A673 (cell line): ENCODE measurements at regions of chr16 and their contacts with region 1.

Region 1: DNA sequence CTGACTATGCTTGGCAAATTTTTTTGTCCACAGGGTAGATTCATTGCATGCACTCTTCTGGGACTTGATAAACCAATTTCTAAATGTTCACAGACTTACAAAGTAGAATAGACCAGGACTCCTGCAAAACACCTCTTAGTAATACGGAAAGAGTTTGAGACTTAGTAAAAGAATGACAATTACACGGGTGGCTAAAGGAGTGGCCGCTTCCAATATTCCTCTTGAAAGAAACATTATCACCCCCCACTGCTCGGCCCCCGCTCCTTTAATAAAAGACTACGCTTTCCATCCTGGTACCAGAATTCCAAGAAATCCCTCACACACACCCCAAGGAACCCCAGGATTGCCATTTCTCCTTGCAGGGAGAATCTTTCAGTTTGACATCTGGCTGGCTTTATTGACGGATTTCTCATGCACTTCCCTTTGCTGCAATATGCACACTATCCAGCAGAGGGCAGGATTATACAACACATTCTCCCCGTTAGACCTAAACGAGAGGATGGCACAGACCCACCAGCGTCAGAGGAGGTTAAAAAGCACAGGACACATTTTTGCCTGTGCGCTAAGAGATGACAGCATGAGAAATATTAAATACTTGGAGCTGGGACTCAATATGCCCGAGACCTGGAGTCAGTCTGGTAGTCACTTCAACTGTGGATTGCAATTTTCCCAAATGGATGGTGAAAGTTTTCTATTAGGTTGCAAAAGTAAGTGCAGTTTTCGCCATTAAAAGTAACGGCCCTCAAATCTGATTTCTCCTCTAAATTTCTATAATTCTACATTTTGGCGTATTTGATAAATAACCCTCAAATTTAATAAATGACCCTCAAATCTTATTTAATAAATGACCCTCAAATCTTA is 46.6 kb upstream of the NUDT7 start:
- DNase-seq: peak; percentile 82
- H3K4me3 ChIP-seq: no peak overlapping the region
- H3K27ac ChIP-seq: no peak overlapping the region
- H3K4me1 ChIP-seq: no peaks in the 10 kb centered on the region
- H3K27me3 ChIP-seq: no peaks in the 10 kb centered on the region
- CTCF ChIP-seq: peak; percentile 90

Region 2: DNA sequence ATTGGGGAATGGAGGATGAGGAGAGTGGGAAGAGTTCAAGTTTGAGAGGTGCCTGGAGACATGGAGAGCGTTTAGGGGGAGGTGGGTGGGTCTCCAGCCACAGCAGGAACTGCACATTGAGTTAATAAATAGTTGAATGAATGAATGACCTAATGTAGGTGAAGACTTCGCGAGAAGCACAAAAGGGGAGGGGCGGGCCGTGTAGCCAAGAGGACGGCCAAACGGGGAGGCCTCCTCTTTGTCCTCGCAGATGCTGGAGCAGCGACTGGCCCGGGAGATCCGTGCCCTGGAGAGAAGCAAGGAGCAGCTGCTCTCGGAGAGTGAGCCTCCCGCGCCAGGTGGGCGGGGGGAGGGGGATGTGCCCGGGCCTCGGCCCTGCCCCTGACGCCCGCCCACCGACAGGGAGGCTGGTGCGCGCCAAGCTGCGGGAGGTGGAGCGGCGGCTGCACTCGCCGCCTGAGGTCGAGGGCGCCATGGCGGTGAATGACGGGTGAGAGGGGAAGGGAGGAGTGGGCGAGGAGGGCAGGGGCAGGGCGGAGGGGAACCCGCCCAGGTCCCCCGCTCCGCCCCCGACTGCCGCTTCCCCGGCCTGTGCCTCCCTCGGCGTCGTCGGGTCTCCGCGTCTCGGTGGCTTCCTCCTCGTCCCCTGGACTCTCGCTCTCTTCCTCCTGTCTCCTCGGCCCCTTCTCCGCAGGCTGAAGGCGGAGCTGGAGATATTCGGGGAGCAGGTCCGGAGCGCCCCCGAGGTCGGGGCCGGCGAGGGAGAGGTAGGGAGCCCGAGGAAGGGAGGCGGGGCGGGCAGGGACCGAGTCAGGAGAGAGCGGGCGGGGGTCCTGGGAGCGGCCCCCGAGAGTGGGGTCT is 463.6 kb before region 1 on chr16:
- CTCF ChIA-PET with region 1: no interaction called
- POLR2A ChIA-PET with region 1: no interaction called
- intact Hi-C with region 1: no loop called
- DNase-seq: peak; percentile 59
- H3K4me3 ChIP-seq: peak overlapping the region; percentile 57
- H3K27ac ChIP-seq: no peak overlapping the region
- H3K4me1 ChIP-seq: peaks cover 4% of the 10 kb centered on the region
- H3K27me3 ChIP-seq: peaks cover 4% of the 10 kb centered on the region
- CTCF ChIP-seq: no peak

Region 3: GRCh38 chr16:77971306-77972271 is 295.9 kb after region 1 on chr16:
- CTCF ChIA-PET with region 1: no interaction called
- POLR2A ChIA-PET with region 1: no interaction called
- intact Hi-C with region 1: loop called (anchors 1 kb)
- DNase-seq: peak; percentile 72
- H3K4me3 ChIP-seq: no peak overlapping the region
- H3K27ac ChIP-seq: no peak overlapping the region
- H3K4me1 ChIP-seq: no peaks in the 10 kb centered on the region
- H3K27me3 ChIP-seq: no peaks in the 10 kb centered on the region
- CTCF ChIP-seq: peak; percentile 86

Region 4: GRCh38 chr16:78002915-78003538 is 327.3 kb after region 1 on chr16:
- CTCF ChIA-PET with region 1: interaction called, 3 read pairs
- POLR2A ChIA-PET with region 1: no interaction called
- intact Hi-C with region 1: loop called (anchors 1 kb)
- DNase-seq: peak; percentile 93
- H3K4me3 ChIP-seq: no peak overlapping the region
- H3K27ac ChIP-seq: no peak overlapping the region
- H3K4me1 ChIP-seq: no peaks in the 10 kb centered on the region
- H3K27me3 ChIP-seq: no peaks in the 10 kb centered on the region
- CTCF ChIP-seq: peak; percentile 90

Region 5: GRCh38 chr16:78094176-78094575 is 418.5 kb after region 1 on chr16:
- CTCF ChIA-PET with region 1: interaction called, 3 read pairs
- POLR2A ChIA-PET with region 1: no interaction called
- intact Hi-C with region 1: loop called (anchors 1 kb)
- DNase-seq: peak; percentile 53
- H3K4me3 ChIP-seq: no peak overlapping the region
- H3K27ac ChIP-seq: no peak overlapping the region
- H3K4me1 ChIP-seq: peaks cover 15% of the 10 kb centered on the region
- H3K27me3 ChIP-seq: no peaks in the 10 kb centered on the region
- CTCF ChIP-seq: peak; percentile 49

Region 6: GRCh38 chr16:78235168-78235800 is 559.6 kb after region 1 on chr16:
- CTCF ChIA-PET with region 1: no interaction called
- POLR2A ChIA-PET with region 1: no interaction called
- intact Hi-C with region 1: loop called (anchors 5 kb)
- DNase-seq: peak; percentile 79
- H3K4me3 ChIP-seq: no peak overlapping the region
- H3K27ac ChIP-seq: no peak overlapping the region
- H3K4me1 ChIP-seq: no peaks in the 10 kb centered on the region
- H3K27me3 ChIP-seq: no peaks in the 10 kb centered on the region
- CTCF ChIP-seq: peak; percentile 78

Region 7: DNA sequence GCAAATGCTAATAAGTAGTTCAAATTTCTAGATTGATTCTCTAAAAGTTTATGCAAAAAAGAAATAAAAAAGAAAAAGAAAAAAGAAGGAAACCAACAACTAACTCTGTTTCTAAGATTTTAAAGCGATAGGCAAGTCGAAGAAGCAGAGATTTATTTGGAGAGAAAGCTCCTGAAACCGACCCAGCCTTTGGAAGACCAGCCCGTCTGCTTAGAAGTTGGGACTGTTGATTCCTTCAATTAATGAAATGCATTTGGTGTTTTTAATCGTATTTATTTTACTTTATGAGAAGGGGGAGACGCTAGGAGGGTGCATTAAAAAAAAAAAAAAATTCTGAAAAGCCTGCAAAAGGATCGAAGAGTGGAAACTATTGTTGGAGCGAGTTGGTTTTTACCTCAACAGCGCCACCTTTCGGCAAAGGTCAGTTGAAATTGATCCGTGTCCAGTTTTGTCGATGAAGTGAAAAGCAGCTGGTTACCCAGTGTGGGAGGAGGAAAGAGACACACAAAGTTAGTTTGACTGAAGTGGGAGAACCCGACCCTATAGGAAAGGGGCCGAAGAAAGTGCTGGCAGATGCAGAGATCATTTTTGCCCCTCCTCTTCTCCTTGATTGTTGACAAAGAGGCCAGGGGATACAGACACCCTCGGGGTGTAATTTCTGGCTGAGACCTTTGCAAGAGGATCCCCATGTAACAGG is 1926.4 kb after region 1 on chr16:
- CTCF ChIA-PET with region 1: no interaction called
- POLR2A ChIA-PET with region 1: no interaction called
- intact Hi-C with region 1: loop called (anchors 10 kb)
- DNase-seq: peak; percentile 70
- H3K4me3 ChIP-seq: peak overlapping the region; percentile 37
- H3K27ac ChIP-seq: no peak overlapping the region
- H3K4me1 ChIP-seq: peaks cover 16% of the 10 kb centered on the region
- H3K27me3 ChIP-seq: peaks cover 73% of the 10 kb centered on the region
- CTCF ChIP-seq: peak; percentile 81